Dendritic cell treated with granulocyte-macrophage colony-stimulating factor and Interleukin-4, amounts not matched to agents 40 ng/mL and 50 ng/mL, for 4 days (primary cell): ENCODE measurements at regions of chr14 and their contacts with region 1.

Region 1: GRCh38 chr14:49971156-49972130 is 78.6 kb downstream of the ARF6 start:
- H3K4me3 Mint-ChIP-seq: peak overlapping the region; percentile 52
- H3K27ac Mint-ChIP-seq: peak overlapping the region; percentile 96
- H3K4me1 Mint-ChIP-seq: peaks cover 64% of the 10 kb centered on the region
- H3K27me3 Mint-ChIP-seq: no peaks in the 10 kb centered on the region

Region 2: DNA sequence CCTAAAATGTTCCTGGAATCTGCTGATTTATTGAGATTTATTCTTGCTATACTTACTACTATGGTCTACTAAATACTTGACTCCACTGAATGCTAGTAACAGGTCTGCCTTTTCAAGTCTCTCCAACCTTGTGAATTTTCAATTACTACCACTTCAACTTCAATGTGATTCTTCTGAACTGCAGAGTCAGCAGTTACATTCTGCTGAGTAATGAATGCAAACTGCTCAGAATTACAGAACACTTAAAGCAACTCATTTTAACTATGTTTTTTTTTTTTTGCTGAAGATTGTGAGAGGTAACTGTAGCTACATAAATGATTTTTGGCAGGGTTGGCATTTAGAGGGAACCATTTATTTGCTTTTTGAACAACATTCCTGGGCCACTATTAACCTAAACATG is 36.8 kb before region 1 on chr14:
- intact Hi-C with region 1: loop called (anchors 5 kb)
- H3K4me3 Mint-ChIP-seq: no peak overlapping the region
- H3K27ac Mint-ChIP-seq: peak overlapping the region; percentile 67
- H3K4me1 Mint-ChIP-seq: peaks cover 45% of the 10 kb centered on the region
- H3K27me3 Mint-ChIP-seq: no peaks in the 10 kb centered on the region

Region 3: GRCh38 chr14:50038398-50039119 is 67.1 kb after region 1 on chr14:
- intact Hi-C with region 1: loop called (anchors 2 kb)
- H3K4me3 Mint-ChIP-seq: peak overlapping the region; percentile 26
- H3K27ac Mint-ChIP-seq: peak overlapping the region; percentile 98
- H3K4me1 Mint-ChIP-seq: peaks cover 68% of the 10 kb centered on the region
- H3K27me3 Mint-ChIP-seq: no peaks in the 10 kb centered on the region